ENCODE measurements at regions of chr15 and their contacts with region 1.

Region 1: DNA sequence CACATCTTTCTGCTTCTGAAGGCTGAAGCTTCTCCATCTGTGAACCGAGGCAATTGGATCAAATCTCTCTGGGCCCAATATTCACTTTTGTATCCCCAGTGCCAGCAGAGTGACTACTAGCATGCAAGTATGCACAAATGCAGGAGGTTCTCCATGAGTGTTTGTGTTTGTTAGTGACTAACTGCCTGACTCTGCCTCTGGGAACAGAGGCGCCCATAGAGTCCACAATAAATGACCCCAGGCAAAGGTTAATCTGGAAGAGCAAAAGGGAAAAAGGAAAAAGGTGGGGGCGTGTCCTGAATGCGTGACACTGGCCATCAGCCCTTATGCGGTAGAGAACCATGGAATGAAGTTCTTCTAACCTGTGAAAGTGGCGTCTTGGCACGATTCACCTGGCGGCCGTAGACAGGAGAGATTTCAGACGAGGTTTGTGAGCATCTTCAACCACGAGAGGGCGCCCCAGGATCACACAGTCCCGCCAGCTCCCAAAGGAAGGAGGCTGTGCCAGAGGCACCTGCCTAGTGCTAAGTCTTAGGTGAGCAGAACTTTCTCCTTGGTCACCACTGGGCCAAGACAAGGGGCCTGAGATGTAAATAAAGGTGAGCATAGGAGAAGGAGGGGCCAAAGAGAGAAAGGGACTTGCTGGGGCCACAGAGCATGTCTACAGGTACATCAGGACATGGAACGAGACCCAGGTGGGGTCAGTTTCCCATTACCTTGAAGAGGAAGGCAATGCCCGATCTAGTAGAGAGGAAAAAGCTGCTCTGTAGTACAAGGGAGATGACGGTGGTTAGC is 44.2 kb downstream of the RBPMS2 start:
- DNase-seq: no peak
- H3K4me3 ChIP-seq: no peak overlapping the region
- H3K27ac ChIP-seq: peak overlapping the region; percentile 29 to 65 (median 56)
- H3K4me1 ChIP-seq: peaks cover 8 to 29% (median 24%) of the 10 kb centered on the region in 4 donors
- H3K27me3 ChIP-seq: no peaks in the 10 kb centered on the region
- CTCF ChIP-seq: peak; percentile 84 to 91 (median 90)
- EP300 ChIP-seq: no peak
- POLR2A ChIP-seq: no peak

Region 2: GRCh38 chr15:64678126-64678819 is 52.9 kb before region 1 on chr15:
- intact Hi-C with region 1: no loop called
- DNase-seq: no peak
- H3K4me3 ChIP-seq: no peak overlapping the region
- H3K27ac ChIP-seq: no peak overlapping the region
- H3K4me1 ChIP-seq: peaks cover 6 to 18% (median 11%) of the 10 kb centered on the region in 4 donors
- H3K27me3 ChIP-seq: no peaks in the 10 kb centered on the region
- CTCF ChIP-seq: no peak
- EP300 ChIP-seq: no peak
- POLR2A ChIP-seq: no peak

Region 3: GRCh38 chr15:64809649-64810496 is 78.7 kb after region 1 on chr15:
- intact Hi-C with region 1: loop called (anchors 2 kb)
- DNase-seq: no peak
- H3K4me3 ChIP-seq: no peak overlapping the region
- H3K27ac ChIP-seq: peak overlapping the region; percentile 90 to 93 (median 92)
- H3K4me1 ChIP-seq: peaks cover 8 to 53% (median 45%) of the 10 kb centered on the region in 4 donors
- H3K27me3 ChIP-seq: no peaks in the 10 kb centered on the region
- CTCF ChIP-seq: peak in 2 of 3 experiments; percentile 95 to 96
- EP300 ChIP-seq: no peak
- POLR2A ChIP-seq: no peak

Region 4: GRCh38 chr15:64905119-64905831 is 174.1 kb after region 1 on chr15:
- intact Hi-C with region 1: loop called (anchors 2 kb)
- DNase-seq: peak; percentile 95
- H3K4me3 ChIP-seq: peak overlapping the region; percentile 39 to 50 (median 48)
- H3K27ac ChIP-seq: peak overlapping the region in 3 of 4 donors; percentile 30 to 61 (median 38)
- H3K4me1 ChIP-seq: peaks cover 0 to 13% (median 11%) of the 10 kb centered on the region in 4 donors
- H3K27me3 ChIP-seq: no peaks in the 10 kb centered on the region
- CTCF ChIP-seq: peak; percentile 90 to 100 (median 95)
- EP300 ChIP-seq: no peak
- POLR2A ChIP-seq: no peak